ENCODE measurements at regions of chr19 and their contacts with region 1.

Region 1: DNA sequence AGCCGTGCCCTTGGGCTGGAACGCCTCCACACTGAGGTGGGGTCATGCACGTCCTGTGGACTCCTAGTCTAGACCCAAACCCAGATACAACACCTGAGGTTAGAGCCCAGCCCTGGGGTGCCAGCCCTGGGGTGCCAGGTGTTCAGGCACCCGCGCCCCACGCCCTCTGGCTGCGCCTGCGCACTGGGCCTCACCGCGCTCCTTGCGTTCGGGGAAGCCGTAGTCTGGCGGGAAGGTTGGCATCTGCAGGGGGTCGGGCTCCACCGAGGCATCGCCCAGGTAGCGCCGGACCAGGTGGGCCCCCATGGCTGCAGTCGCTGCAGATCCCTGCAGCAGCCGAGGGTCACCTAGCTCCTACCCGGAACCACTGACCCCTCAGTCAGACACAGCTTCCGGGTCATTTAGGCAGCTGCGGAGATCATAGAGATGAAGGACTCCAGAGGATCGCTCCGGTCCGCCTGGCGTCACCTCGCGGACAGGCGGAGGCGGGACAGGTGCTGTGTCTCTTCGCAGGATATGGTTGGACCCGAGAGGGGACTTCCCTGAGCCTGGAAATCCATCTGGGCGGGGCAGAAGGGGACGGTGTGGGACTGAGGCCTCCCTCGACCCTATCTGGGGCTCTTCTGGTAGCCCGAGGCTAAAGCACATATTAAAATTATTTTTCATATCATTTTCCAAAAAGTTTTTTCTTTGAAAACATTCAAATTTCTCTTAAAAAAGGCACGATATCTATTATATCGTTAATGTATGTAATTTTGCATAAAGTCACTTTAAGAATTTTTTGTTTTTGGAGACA is at the start of gene NDUFB7:
- DNase-seq: peak; percentile 92
- H3K4me3 Mint-ChIP-seq: peak within 1 kb of the TSS; percentile 96
- H3K27ac Mint-ChIP-seq: peak within 1 kb of the TSS; percentile 87
- H3K4me1 Mint-ChIP-seq: peaks cover 51% of the 10 kb centered on the region
- H3K27me3 Mint-ChIP-seq: peaks cover 4% of the 10 kb centered on the region

Region 2: DNA sequence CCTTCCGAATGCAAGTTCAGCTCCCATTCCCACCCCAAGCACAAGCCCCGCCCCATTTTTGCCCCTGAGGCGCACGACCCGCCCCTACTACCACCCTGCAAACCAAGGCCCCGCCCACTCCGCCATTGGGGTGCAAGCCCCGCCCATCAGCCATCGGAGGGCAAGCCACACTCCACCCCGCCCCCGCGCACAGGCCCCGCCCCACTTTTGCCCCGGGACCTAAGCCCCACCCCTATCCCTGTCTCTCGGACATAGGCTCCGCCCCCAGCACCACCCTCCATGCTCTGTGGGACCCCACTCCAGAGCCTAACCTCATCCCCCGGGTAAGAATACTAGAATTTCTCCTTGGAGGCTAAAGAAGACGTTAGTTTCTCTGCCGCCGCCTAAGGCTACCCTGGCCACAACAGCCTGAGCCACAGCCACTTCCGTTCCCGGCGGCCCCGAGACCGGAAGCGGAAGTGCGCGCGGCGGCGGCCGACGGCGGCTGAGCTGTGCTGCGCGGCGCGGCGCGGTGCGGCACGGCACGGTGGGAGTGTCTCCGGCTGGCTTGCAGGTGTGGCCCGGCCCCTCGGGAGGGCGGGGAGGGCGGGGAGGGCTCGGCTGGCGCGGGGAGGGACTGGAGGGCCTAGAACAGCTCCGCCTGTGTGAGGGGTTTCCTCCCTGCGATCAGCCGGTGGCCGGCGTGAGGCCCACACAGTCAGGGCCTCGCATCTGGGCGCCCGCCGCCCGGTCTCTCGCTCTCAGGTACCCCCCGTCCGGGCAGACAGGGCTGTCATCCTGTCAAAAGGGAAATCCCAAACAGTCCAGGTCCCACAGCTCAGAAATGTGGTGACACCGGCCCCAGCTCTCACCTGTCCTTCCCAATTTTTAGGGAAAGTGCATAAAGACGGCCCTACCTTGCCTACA is 118.0 kb after region 1 on chr19 and contains the start of gene ZNF333:
- CTCF ChIA-PET with region 1: interaction called, 170 read pairs
- DNase-seq: peak; percentile 100
- H3K4me3 Mint-ChIP-seq: peak within 1 kb of the TSS; percentile 93
- H3K27ac Mint-ChIP-seq: peak within 1 kb of the TSS; percentile 100
- H3K4me1 Mint-ChIP-seq: peaks cover 23% of the 10 kb centered on the region
- H3K27me3 Mint-ChIP-seq: no peaks in the 10 kb centered on the region

Measured in activated naive CD4-positive, alpha-beta T cell treated with anti-CD3 and anti-CD28 coated beads, Interleukin-2, amount 10 ng/mL, durations not matched to agents 7 days and 5 days (primary cell).